Aorta (tissue), 5 donors: ENCODE measurements at regions of chr4 and their contacts with region 1.

Region 1: DNA sequence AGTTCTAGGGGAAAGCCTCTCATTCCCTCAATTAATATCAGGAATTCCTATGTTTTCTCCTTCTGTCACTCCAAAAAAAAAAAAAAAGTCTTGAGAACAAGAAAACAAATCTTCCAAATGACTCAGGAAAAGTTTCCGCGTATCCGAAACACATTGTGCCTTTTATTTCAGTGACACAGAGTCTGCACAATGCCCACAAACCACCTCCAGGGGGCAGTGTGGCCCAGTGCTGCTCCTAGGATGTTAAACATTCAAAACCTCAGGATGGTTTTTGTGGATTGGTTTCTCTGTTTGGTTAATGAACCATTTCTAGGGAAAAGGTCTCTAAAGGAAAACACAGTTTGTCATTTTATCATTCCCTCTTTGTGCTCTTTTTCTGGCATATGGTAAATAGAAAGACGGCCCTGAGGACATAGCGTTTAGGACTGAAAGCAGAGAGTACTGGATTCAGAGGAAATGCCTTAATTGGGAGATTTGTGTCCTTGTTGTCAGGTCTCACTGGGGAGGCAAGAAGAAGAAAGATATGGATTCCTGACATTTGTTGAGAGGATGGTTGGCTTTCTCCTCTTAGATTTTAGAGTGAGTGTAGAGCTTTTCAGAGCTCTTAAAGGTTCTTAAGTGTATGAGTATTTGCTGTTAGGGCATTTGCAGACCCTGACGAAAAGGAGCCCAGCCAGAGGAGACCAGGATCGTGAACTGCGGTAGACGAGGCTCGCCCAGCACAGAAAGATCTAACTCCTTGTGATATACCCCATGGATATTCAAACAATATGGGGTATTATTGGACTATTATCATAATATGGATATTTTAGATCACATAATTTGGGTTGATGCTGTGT is 65.7 kb upstream of the MAP9 start:
- DNase-seq: peak; percentile 85 to 95
- ATAC-seq: peak; percentile 95
- H3K4me3 ChIP-seq: peak overlapping the region in 1 of 2 donors; percentile 51
- H3K27ac ChIP-seq: no peak overlapping the region
- H3K4me1 ChIP-seq: no peaks in the 10 kb centered on the region
- H3K27me3 ChIP-seq: no peaks in the 10 kb centered on the region

Region 2: DNA sequence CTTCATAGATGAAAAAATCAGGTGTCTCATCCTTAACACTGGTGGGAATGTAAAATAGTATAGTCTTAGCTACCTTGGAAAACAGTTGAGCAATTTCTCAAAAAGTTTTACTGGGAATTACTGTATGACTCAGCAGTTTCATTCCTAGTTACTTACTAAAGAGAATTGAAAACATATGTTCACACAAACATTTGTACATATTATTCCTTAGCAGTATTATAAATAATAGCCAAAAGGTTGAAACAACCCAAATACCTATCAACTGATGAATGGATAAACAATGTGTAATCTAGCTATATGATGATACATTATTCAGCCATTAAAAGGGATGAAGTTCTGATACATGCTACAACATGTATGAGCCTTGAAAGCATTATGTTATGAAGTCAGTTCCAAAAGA is 619.7 kb before region 1 on chr4:
- intact Hi-C with region 1: no loop called
- DNase-seq: no peak
- ATAC-seq: no peak
- H3K4me3 ChIP-seq: no peak overlapping the region
- H3K27ac ChIP-seq: no peak overlapping the region
- H3K4me1 ChIP-seq: no peaks in the 10 kb centered on the region
- H3K27me3 ChIP-seq: no peaks in the 10 kb centered on the region

Region 3: GRCh38 chr4:155512817-155513216 is 70.3 kb after region 1 on chr4:
- intact Hi-C with region 1: loop called in 1 of 2 experiments (anchors 10 kb)
- DNase-seq: no peak
- ATAC-seq: peak; percentile 68
- H3K4me3 ChIP-seq: no peak overlapping the region
- H3K27ac ChIP-seq: no peak overlapping the region
- H3K4me1 ChIP-seq: peaks cover 0 to 7% of the 10 kb centered on the region in 2 donors
- H3K27me3 ChIP-seq: no peaks in the 10 kb centered on the region

Region 4: GRCh38 chr4:155777971-155778735 is 335.7 kb after region 1 on chr4:
- intact Hi-C with region 1: loop called in 1 of 2 experiments (anchors 1 kb)
- DNase-seq: no peak
- ATAC-seq: peak; percentile 77
- H3K4me3 ChIP-seq: no peak overlapping the region
- H3K27ac ChIP-seq: peak overlapping the region in 1 of 2 donors; percentile 43
- H3K4me1 ChIP-seq: peaks cover 1 to 4% of the 10 kb centered on the region in 2 donors
- H3K27me3 ChIP-seq: no peaks in the 10 kb centered on the region

Region 5: DNA sequence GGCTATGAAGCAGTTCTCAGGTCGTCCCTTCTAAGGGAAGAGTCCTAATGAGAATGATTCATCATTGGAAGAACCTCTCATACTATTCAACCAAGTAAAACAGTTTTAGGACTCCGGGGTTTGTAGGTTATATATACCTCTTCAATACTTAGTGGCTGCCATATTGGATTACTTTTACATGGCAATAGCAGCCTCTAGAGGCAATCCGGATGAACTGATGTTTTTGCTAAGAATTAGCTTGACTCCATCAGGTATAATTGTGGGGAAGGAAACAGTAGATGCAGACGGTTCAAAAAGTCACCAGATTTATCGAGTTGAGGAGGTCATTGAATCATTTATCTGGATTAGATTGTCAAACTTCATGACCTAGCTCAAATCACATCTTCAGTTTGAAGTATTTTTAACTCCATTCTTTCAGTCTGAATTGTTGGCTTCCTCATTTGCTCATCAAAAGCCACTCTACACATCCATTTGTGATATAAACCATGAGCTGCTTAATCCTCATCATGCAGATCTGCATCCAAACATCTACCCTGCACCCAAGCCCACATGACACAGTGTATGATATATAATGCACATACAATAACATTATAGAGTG is 344.7 kb after region 1 on chr4:
- intact Hi-C with region 1: loop called (anchors 2 kb)
- DNase-seq: no peak
- ATAC-seq: peak; percentile 83
- H3K4me3 ChIP-seq: no peak overlapping the region
- H3K27ac ChIP-seq: no peak overlapping the region
- H3K4me1 ChIP-seq: no peaks in the 10 kb centered on the region
- H3K27me3 ChIP-seq: no peaks in the 10 kb centered on the region